ENCODE measurements at regions of chr14 and their contacts with region 1.

Region 1: GRCh38 chr14:70714055-70714621 is 72.4 kb downstream of the TTC9 start:
- DNase-seq: no peak
- ATAC-seq: no peak

Region 2: DNA sequence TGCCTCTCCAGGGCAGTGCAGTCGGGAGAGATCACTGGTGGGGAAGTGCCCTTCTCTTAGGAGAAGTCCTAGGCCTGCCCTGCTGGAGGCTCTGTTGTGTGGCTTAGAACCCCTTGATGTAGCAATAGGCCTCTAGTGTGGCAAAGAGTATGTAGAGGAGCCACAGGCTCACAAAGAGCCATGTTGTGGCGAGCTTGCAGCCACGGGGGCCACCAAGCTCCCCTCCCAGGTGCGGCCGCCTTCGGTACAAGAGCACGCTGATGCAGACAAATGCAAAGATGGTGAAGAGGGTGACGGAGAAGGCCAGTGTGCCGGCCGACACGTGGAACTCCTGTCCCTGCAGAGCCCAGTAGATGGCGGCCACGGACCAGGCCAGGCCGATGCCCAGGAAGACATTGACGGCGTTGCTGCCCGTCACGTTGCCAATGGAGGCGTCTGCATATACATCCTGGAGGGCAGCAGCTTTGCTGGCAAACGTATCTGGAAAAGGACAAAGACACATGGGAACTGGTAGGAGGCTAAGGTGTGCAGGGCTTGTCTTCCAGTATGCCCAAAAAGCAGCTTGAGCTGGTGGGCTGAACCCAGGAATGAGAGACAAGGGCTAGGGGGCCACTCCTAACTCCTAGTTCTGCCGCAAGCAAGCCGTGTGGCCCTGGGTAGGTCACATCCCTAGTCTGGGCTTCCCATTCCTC is 668.1 kb before region 1 on chr14:
- intact Hi-C with region 1: loop called (anchors 5 kb)
- DNase-seq: peak; percentile 81
- ATAC-seq: peak; percentile 71

Region 3: GRCh38 chr14:70622111-70622712 is 91.9 kb before region 1 on chr14:
- intact Hi-C with region 1: loop called (anchors 2 kb)
- DNase-seq: no peak
- ATAC-seq: peak; percentile 42

Measured in Right ventricle myocardium inferior (tissue), 1 donor.